CD4-positive, alpha-beta memory T cell (primary cell): ENCODE measurements at regions of chr10 and their contacts with region 1.

Region 1: DNA sequence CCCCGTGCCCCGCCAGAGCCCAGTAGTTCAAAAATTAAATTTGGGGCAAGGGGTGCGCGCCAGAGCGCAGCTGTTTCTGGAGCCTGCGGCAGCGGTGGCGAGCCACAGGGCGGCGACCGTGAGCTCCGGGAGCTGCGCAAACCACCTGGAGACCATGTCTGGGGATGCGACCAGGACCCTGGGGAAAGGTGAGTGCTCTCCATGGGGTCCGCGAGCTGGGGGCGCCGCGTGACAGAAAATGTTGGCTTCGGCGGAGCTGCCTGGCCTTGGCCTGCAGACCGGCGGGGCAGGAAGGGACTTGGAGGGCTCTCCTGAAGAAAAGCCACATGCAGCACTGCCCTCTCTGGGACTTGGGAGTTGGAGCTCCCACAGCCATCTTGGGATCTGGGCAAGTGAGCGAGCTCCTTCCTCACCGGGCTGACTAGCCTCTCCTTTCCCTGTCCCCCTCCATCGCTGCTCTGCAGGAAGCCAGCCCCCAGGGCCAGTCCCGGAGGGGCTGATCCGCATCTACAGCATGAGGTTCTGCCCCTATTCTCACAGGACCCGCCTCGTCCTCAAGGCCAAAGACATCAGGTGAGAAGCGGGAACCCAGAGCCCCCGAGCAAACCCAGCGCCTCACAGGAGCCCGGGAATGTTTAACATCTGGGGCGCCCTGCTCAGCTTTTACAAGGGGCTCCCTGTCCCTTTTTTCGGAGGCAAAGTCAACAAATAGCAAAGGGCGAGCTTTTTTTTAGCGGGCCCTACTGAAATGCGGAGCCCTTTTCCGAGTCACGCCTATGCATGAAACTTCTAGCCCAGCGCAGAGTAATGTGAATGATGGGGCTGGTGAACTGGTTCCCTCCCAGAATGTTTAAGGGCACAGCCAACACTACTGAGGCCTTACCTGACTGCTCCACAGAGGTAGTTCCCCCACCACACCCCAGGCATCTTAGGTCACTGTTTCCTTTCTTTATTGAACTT is 6.1 kb downstream of the GSTO2 start:
- DNase-seq: peak in 3 of 5 donors; percentile 36 to 43 (median 40)
- H3K4me3 ChIP-seq: no peak overlapping the region
- H3K4me3 Mint-ChIP-seq: peak overlapping the region in 6 of 8 donors; percentile 10 to 71 (median 54)
- H3K27ac ChIP-seq: no peak overlapping the region
- H3K27ac Mint-ChIP-seq: peak overlapping the region in 1 of 7 donors; percentile 35
- H3K4me1 ChIP-seq: peaks cover 11% of the 10 kb centered on the region
- H3K4me1 Mint-ChIP-seq: no peaks in the 10 kb centered on the region
- H3K27me3 ChIP-seq: no peaks in the 10 kb centered on the region
- H3K27me3 Mint-ChIP-seq: peaks cover 9 to 10% of the 10 kb centered on the region in 2 donors

Region 2: DNA sequence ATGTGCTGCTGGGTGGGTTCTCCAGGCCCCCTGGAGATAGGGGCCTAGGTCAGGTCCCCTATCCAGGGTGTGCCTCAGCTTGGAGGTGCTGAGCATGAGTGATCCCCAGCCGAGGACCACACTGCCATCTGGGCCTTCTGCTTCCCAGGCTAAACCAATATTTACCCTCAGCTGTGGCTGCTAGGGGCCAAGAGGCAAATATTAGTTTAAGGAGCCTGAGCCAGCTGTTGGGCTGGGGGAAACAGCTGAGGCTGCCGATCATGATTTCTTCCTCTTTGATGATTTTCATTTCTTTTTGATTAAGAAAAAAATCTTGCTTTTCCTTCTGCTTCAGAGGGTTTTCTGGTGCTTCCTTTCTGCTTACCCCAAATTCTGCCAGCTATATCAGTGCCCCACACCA is 698.2 kb before region 1 on chr10:
- CTCF ChIA-PET with region 1: no interaction called
- POLR2A ChIA-PET with region 1: no interaction called
- intact Hi-C with region 1: no loop called
- DNase-seq: no peak
- H3K4me3 ChIP-seq: no peak overlapping the region
- H3K4me3 Mint-ChIP-seq: no peak overlapping the region
- H3K27ac ChIP-seq: no peak overlapping the region
- H3K27ac Mint-ChIP-seq: peak overlapping the region in 1 of 7 donors; percentile 43
- H3K4me1 ChIP-seq: no peaks in the 10 kb centered on the region
- H3K4me1 Mint-ChIP-seq: peaks cover 0 to 5% (median 0%) of the 10 kb centered on the region in 4 donors
- H3K27me3 ChIP-seq: no peaks in the 10 kb centered on the region
- H3K27me3 Mint-ChIP-seq: peaks cover 1 to 2% of the 10 kb centered on the region in 2 donors

Region 3: GRCh38 chr10:103759100-103759781 is 515.8 kb before region 1 on chr10:
- CTCF ChIA-PET with region 1: no interaction called
- POLR2A ChIA-PET with region 1: no interaction called
- intact Hi-C with region 1: no loop called
- DNase-seq: peak in 4 of 5 donors; percentile 24 to 44 (median 31)
- H3K4me3 ChIP-seq: peak overlapping the region in 1 of 2 donors; percentile 1
- H3K4me3 Mint-ChIP-seq: peak overlapping the region in 6 of 8 donors; percentile 51 to 76 (median 70)
- H3K27ac ChIP-seq: no peak overlapping the region
- H3K27ac Mint-ChIP-seq: peak overlapping the region; percentile 70 to 87 (median 79)
- H3K4me1 ChIP-seq: peaks cover 64% of the 10 kb centered on the region
- H3K4me1 Mint-ChIP-seq: peaks cover 33 to 67% (median 52%) of the 10 kb centered on the region in 4 donors
- H3K27me3 ChIP-seq: no peaks in the 10 kb centered on the region
- H3K27me3 Mint-ChIP-seq: no peaks in the 10 kb centered on the region

Region 4: DNA sequence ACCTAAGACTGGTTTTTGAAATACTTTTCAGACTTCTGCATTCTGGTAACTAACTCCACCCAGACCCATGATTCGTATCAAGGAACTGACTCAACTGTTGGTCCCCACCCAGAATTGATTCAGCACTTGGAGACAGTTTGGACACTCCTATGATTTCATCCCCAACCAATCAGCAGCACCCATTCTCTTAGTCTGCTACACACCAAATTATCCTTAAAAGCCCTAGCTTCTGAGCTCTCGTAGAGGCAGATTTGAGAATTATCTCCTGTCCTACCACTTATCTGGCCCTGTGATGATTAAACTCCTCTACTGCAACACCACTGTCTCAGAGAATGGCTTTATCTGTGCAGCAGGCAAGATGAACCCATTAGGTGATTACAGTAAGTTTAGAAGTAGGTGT is 28.1 kb before region 1 on chr10:
- CTCF ChIA-PET with region 1: interaction called, 14 read pairs
- POLR2A ChIA-PET with region 1: no interaction called
- intact Hi-C with region 1: no loop called
- DNase-seq: no peak
- H3K4me3 ChIP-seq: no peak overlapping the region
- H3K4me3 Mint-ChIP-seq: no peak overlapping the region
- H3K27ac ChIP-seq: no peak overlapping the region
- H3K27ac Mint-ChIP-seq: no peak overlapping the region
- H3K4me1 ChIP-seq: no peaks in the 10 kb centered on the region
- H3K4me1 Mint-ChIP-seq: no peaks in the 10 kb centered on the region
- H3K27me3 ChIP-seq: no peaks in the 10 kb centered on the region
- H3K27me3 Mint-ChIP-seq: peaks cover 5 to 11% of the 10 kb centered on the region in 2 donors

Region 5: DNA sequence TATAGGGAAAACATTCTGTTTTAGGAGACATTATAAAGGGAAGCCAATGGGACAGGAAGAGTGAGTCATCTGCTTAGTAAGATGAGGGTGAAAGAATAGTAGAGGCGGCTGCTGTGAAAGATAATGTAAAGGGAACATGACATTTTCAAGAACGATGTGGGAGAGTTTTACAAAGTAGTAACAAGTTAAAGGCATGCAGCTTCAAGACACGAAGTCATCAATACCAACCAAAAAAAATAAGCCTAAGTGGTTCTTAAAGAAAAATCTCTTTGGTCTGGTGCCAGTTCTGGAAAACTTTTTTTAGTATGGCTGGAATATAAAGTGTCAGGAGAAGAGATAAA is 14.3 kb before region 1 on chr10:
- CTCF ChIA-PET with region 1: interaction called, 73 read pairs
- POLR2A ChIA-PET with region 1: interaction called, 59 read pairs
- intact Hi-C with region 1: no loop called
- DNase-seq: no peak
- H3K4me3 ChIP-seq: no peak overlapping the region
- H3K4me3 Mint-ChIP-seq: peak overlapping the region in 6 of 8 donors; percentile 12 to 34 (median 18)
- H3K27ac ChIP-seq: peak overlapping the region; percentile 17
- H3K27ac Mint-ChIP-seq: peak overlapping the region; percentile 48 to 90 (median 64)
- H3K4me1 ChIP-seq: peaks cover 95% of the 10 kb centered on the region
- H3K4me1 Mint-ChIP-seq: peaks cover 60 to 89% (median 76%) of the 10 kb centered on the region in 4 donors
- H3K27me3 ChIP-seq: no peaks in the 10 kb centered on the region
- H3K27me3 Mint-ChIP-seq: no peaks in the 10 kb centered on the region

Region 6: DNA sequence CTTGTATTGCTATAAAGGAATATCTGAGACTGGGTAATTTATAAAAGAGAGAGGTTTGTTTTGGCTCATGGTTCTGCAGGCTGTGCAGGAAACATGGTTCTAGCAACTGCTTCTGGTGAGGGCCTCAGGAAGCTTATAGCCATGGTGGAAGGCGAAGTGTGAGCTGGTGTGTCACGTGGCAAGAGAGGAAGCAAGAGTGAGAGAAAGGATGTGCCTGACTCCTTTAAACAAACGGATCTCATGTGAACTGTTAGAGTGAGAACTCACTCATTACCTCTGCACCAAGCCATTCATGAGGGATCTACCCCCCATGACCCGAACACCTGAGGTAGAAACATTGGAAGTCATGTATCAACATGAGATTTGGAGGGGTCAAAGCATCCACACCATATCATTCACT is 70.9 kb after region 1 on chr10:
- CTCF ChIA-PET with region 1: interaction called, 55 read pairs
- POLR2A ChIA-PET with region 1: no interaction called
- intact Hi-C with region 1: no loop called
- DNase-seq: no peak
- H3K4me3 ChIP-seq: no peak overlapping the region
- H3K4me3 Mint-ChIP-seq: peak overlapping the region in 2 of 8 donors; percentile 49 to 74
- H3K27ac ChIP-seq: no peak overlapping the region
- H3K27ac Mint-ChIP-seq: peak overlapping the region in 5 of 7 donors; percentile 13 to 83 (median 72)
- H3K4me1 ChIP-seq: peaks cover 14% of the 10 kb centered on the region
- H3K4me1 Mint-ChIP-seq: peaks cover 10 to 19% (median 13%) of the 10 kb centered on the region in 4 donors
- H3K27me3 ChIP-seq: no peaks in the 10 kb centered on the region
- H3K27me3 Mint-ChIP-seq: no peaks in the 10 kb centered on the region